Heart right ventricle (tissue), 16 donors: ENCODE measurements at regions of chr10 and their contacts with region 1.

Region 1: GRCh38 chr10:96395931-96396877 is 37.4 kb upstream of the OPALIN start:
- DNase-seq: peak; percentile 58 to 65
- ATAC-seq: peak in 7 of 8 donors; percentile 44 to 77 (median 72)
- H3K4me3 ChIP-seq: no peak overlapping the region
- H3K27ac ChIP-seq: peak overlapping the region in 1 of 10 donors; percentile 64
- H3K4me1 ChIP-seq: peaks cover 0 to 51% (median 25%) of the 10 kb centered on the region in 9 donors
- H3K27me3 ChIP-seq: peaks cover 0 to 18% (median 0%) of the 10 kb centered on the region in 7 donors
- CTCF ChIP-seq: peak; percentile 65 to 92 (median 85)

Region 2: DNA sequence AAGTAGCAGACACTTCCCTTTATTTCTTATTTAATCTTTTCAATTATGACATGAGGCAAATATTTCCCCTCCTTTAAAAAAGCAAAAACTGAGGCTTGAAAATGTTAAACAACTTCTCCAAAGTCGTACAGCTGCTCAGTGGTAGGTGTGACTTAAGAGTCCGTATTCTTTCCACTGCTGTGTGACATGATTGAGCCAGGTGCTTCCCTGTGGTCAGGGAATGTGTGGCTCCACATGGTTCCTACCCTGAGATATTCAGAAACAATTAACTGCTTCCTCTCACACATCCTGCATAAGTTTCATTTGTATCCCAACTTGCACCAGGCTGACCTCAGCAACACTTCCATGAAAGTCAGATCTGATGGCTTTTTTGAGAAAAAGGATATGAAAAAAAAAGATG is 51.0 kb before region 1 on chr10:
- intact Hi-C with region 1: no loop called
- DNase-seq: no peak
- ATAC-seq: no peak
- H3K4me3 ChIP-seq: no peak overlapping the region
- H3K27ac ChIP-seq: no peak overlapping the region
- H3K4me1 ChIP-seq: no peaks in the 10 kb centered on the region
- H3K27me3 ChIP-seq: peaks cover 0 to 3% (median 0%) of the 10 kb centered on the region in 7 donors
- CTCF ChIP-seq: no peak

Region 3: GRCh38 chr10:96374985-96375830 is 21.0 kb before region 1 on chr10:
- intact Hi-C with region 1: no loop called
- DNase-seq: peak; percentile 84 to 88
- ATAC-seq: peak; percentile 83 to 90 (median 86)
- H3K4me3 ChIP-seq: peak overlapping the region in 9 of 10 donors; percentile 30 to 58 (median 50)
- H3K27ac ChIP-seq: peak overlapping the region in 2 of 10 donors; percentile 15 to 30
- H3K4me1 ChIP-seq: peaks cover 2 to 38% (median 14%) of the 10 kb centered on the region in 9 donors
- H3K27me3 ChIP-seq: no peaks in the 10 kb centered on the region
- CTCF ChIP-seq: peak; percentile 91 to 100 (median 98)

Region 4: GRCh38 chr10:96448021-96448457 is 51.8 kb after region 1 on chr10:
- intact Hi-C with region 1: loop called in 1 of 10 experiments (anchors 2 kb)
- DNase-seq: peak; percentile 76 to 79
- ATAC-seq: peak; percentile 86 to 92 (median 91)
- H3K4me3 ChIP-seq: no peak overlapping the region
- H3K27ac ChIP-seq: peak overlapping the region in 2 of 10 donors; percentile 42 to 43
- H3K4me1 ChIP-seq: peaks cover 0 to 19% (median 9%) of the 10 kb centered on the region in 9 donors
- H3K27me3 ChIP-seq: no peaks in the 10 kb centered on the region
- CTCF ChIP-seq: no peak

Region 5: GRCh38 chr10:96513698-96514561 is 117.7 kb after region 1 on chr10 and contains the start of gene TLL2:
- intact Hi-C with region 1: loop called (anchors 1 to 5 kb)
- DNase-seq: peak; percentile 88 to 90
- ATAC-seq: peak; percentile 93 to 97 (median 96)
- H3K4me3 ChIP-seq: peak within 1 kb of the TSS; percentile 46 to 89 (median 62)
- H3K27ac ChIP-seq: peak within 1 kb of the TSS in 8 of 10 donors; percentile 39 to 71 (median 67)
- H3K4me1 ChIP-seq: peaks cover 3 to 25% (median 24%) of the 10 kb centered on the region in 9 donors
- H3K27me3 ChIP-seq: peaks cover 0 to 35% (median 3%) of the 10 kb centered on the region in 7 donors
- CTCF ChIP-seq: peak; percentile 48 to 95 (median 77)
- total RNA-seq, gene TLL2: 2.8 to 9.2 (median 6.9) TPM

Region 6: GRCh38 chr10:96556003-96556402 is 159.8 kb after region 1 on chr10:
- intact Hi-C with region 1: loop called in 1 of 10 experiments (anchors 10 kb)
- DNase-seq: no peak
- ATAC-seq: peak in 1 of 8 donors; percentile 33
- H3K4me3 ChIP-seq: no peak overlapping the region
- H3K27ac ChIP-seq: no peak overlapping the region
- H3K4me1 ChIP-seq: peaks cover 0 to 3% (median 0%) of the 10 kb centered on the region in 9 donors
- H3K27me3 ChIP-seq: no peaks in the 10 kb centered on the region
- CTCF ChIP-seq: peak in 8 of 9 donors; percentile 15 to 66 (median 51)

Region 7: DNA sequence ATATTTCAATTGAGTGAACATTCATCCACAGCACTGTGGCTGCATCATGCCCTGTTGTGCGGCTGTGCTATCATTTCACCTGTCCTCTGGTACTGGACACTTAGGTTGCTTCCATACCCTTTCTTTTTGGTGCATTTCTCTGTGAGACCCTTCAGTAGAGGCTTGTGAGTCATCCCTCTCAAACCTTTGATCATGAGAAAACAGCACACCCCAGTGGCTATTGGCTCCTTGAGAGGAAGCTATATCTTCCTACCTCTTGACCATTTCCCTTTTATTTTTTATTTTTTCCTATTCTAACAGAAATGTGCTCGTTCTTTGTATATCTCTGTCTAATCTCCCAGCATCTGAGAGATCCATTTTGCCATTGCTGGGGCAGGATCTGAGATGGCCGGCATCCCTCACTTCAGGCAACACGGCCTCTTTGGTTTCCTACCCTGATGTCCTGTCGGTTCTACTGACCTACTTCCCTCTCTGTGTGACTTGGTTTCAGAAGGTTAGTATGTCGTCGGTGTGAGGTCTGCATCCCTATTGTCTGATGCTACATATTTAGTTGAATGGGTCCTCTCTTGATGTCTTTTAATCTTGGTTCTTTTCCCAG is 347.9 kb after region 1 on chr10:
- intact Hi-C with region 1: loop called in 2 of 10 experiments (anchors 10 kb)
- DNase-seq: no peak
- ATAC-seq: peak in 1 of 8 donors; percentile 55
- H3K4me3 ChIP-seq: no peak overlapping the region
- H3K27ac ChIP-seq: no peak overlapping the region
- H3K4me1 ChIP-seq: peaks cover 0 to 43% (median 0%) of the 10 kb centered on the region in 9 donors
- H3K27me3 ChIP-seq: peaks cover 0 to 9% (median 0%) of the 10 kb centered on the region in 7 donors
- CTCF ChIP-seq: peak in 8 of 9 donors; percentile 8 to 51 (median 30)

Region 8: DNA sequence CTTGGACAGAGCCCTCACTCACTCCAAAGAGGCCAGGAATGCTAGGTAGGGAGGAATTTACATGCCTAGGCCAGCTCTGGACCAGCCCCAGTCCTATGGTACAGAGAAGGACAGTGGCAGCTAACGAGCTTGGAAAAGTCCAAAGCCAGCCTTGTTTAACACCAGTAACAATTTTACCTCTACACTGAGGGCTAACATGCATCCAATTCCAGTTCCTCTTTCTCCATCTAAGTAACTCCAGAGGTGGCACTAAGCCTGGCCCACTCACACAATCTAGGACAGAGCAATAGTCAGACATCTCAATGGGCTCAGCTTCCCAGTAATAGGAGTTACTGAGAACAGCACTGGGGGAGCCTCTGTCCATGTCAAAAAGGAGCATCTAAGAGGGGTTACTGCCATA is 430.2 kb after region 1 on chr10:
- intact Hi-C with region 1: loop called in 2 of 10 experiments (anchors 10 kb)
- DNase-seq: no peak
- ATAC-seq: no peak
- H3K4me3 ChIP-seq: no peak overlapping the region
- H3K27ac ChIP-seq: no peak overlapping the region
- H3K4me1 ChIP-seq: peaks cover 0 to 18% (median 6%) of the 10 kb centered on the region in 9 donors
- H3K27me3 ChIP-seq: no peaks in the 10 kb centered on the region
- CTCF ChIP-seq: no peak